Naive thymus-derived CD4-positive, alpha-beta T cell (primary cell): ENCODE measurements at regions of chr2 and their contacts with region 1.

Region 1: GRCh38 chr2:86808315-86809161 is 17.8 kb upstream of the CD8A start:
- DNase-seq: peak; percentile 78 to 94 (median 88)
- ATAC-seq: peak; percentile 95
- H3K4me3 ChIP-seq: peak overlapping the region; percentile 46
- H3K4me3 Mint-ChIP-seq: peak overlapping the region; percentile 70 to 94 (median 88)
- H3K27ac ChIP-seq: no peak overlapping the region
- H3K27ac Mint-ChIP-seq: peak overlapping the region in 1 of 9 donors; percentile 28
- H3K4me1 ChIP-seq: peaks cover 17 to 42% of the 10 kb centered on the region in 2 donors
- H3K4me1 Mint-ChIP-seq: peaks cover 6 to 30% (median 21%) of the 10 kb centered on the region in 7 donors
- H3K27me3 ChIP-seq: no peaks in the 10 kb centered on the region
- H3K27me3 Mint-ChIP-seq: peaks cover 39 to 64% (median 45%) of the 10 kb centered on the region in 5 donors

Region 2: DNA sequence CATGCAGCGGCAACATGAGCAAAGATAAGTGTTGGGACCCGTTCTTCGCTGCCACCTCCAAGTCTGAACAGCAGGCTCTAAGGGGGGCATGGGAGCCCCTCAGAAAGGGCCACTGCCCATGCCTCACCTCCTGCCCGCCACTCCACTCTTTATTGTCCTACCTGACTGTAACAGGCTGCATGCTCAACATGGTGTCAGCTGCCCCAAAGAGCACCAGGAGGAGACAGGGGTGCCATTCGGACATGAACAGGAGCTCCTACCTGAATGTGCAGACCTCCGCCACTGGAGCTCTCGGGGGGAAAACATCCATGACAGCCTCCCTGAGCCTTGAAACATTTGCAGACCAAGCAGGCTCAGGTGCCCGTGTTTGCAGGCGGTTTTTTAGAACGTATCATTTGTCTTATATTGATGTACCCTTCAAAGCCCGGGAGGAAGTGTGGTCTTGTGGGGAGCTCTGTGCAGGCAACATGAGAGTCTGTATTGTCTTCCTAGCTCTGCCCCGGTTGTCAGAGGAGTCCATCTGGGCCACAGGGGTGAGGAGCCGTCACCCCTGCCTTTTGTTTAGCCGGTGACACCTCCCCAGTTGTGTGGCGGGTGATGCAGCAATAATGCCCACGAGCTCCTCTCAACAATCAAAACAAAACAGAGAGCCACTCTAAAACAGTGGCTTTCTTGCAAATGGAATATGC is 17.3 kb after region 1 on chr2:
- CTCF ChIA-PET with region 1: interaction called, 7 read pairs
- POLR2A ChIA-PET with region 1: no interaction called
- intact Hi-C with region 1: loop called in 1 of 2 experiments (anchors 2 kb)
- DNase-seq: peak in 7 of 9 donors; percentile 23 to 68 (median 56)
- ATAC-seq: peak; percentile 88
- H3K4me3 ChIP-seq: peak overlapping the region; percentile 59
- H3K4me3 Mint-ChIP-seq: peak overlapping the region; percentile 73 to 88 (median 80)
- H3K27ac ChIP-seq: peak overlapping the region; percentile 26
- H3K27ac Mint-ChIP-seq: peak overlapping the region; percentile 49 to 92 (median 76)
- H3K4me1 ChIP-seq: peaks cover 15 to 55% of the 10 kb centered on the region in 2 donors
- H3K4me1 Mint-ChIP-seq: peaks cover 11 to 36% (median 29%) of the 10 kb centered on the region in 7 donors
- H3K27me3 ChIP-seq: no peaks in the 10 kb centered on the region
- H3K27me3 Mint-ChIP-seq: peaks cover 3 to 9% (median 4%) of the 10 kb centered on the region in 5 donors